HEK293T (cell line): ENCODE measurements at regions of chr12 and their contacts with region 1.

Region 1: DNA sequence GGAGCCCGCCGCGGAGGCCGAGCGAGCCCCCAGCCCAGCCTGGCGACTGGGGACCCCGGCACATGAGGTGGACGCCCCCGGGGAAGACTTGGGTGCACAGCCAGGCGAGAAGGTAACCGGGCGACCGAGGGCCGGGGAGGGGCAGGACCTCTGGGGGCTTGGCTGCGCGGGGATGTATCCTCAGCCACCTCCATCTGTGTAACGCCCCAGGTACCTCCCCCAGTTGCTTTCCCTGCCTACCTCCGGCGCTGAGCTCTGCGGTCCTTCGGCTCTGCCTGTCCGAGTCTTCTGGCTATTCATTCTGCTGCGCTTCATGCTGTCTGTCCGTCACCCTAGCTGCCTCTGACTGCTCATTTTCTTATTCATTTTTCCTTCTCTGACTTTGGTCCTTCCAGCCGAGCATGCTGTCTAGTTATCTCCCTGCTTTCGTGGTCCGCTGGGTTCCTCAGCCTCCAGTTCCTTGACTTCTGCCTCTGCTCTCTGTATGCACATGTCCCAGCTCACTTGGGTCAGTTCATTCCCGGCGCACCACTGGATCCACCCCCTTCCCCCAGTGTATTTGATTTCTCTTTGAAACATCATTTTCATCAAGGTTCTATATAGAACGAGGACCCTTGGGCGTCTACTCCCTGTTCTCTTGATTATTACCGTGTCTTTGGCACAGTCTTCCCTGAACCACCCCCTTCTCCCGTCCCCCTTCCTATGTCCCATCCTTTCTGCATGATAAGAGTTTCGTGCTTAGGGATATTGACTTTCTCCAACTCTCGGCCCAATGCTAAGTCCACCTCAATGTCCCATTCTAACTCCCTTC is 612 bp downstream of the PHC1 start:
- DNase-seq: peak; percentile 71

Region 2: DNA sequence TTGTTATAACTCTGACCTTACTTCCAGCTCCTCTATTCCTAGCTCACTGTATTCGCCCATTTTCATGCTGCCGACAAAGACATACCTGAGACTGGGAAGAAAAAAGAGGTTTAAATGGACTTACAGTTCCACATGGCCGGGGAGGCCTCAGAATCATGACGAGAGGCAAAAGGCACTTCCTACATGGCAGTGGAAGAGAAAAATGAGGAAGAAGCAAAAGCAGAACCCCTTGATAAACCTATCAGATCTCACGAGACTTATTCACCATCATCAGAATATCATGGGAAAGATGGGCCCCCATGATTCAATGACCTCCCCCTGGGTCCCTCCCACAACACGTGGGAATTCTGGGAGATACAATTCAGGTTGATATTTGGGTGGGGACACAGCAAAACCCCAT is 15.1 kb before region 1 on chr12:
- CTCF ChIA-PET with region 1: no interaction called
- POLR2A ChIA-PET with region 1: no interaction called
- DNase-seq: no peak

Region 3: GRCh38 chr12:8949342-8950220 is 34.7 kb after region 1 on chr12 and contains the start of gene M6PR:
- CTCF ChIA-PET with region 1: interaction called, 4 read pairs
- POLR2A ChIA-PET with region 1: interaction called, 14 read pairs
- DNase-seq: peak; percentile 92